ENCODE measurements at regions of chr2 and their contacts with region 1.

Region 1: DNA sequence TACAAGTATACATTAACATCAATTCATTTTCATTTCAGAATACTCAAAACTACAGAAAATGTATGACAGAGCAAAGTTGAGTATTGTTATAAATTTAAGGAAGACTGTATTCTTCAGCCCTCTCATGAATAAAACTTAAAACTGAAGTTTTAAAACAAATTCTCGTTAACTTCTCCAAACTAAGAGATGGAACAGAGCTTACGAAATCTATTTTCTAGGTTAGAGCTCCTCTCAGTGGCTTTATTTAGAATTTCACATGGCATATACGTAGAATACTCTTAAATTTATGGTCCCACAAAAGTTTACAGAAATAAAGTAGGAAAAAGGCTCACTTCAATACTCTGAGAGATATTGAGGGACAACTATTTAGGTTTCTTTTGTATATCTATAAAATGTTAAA is 612.1 kb downstream of the KCNJ3 start:
- DNase-seq: no peak
- H3K4me3 ChIP-seq: no peak overlapping the region
- H3K27ac ChIP-seq: no peak overlapping the region
- H3K4me1 ChIP-seq: no peaks in the 10 kb centered on the region
- H3K27me3 ChIP-seq: no peaks in the 10 kb centered on the region
- CTCF ChIP-seq: peak in 2 of 3 experiments; percentile 19 to 41

Region 2: GRCh38 chr2:154439156-154439555 is 871.4 kb before region 1 on chr2:
- intact Hi-C with region 1: loop called (anchors 10 kb)
- DNase-seq: no peak
- H3K4me3 ChIP-seq: no peak overlapping the region
- H3K27ac ChIP-seq: no peak overlapping the region
- H3K4me1 ChIP-seq: no peaks in the 10 kb centered on the region
- H3K27me3 ChIP-seq: no peaks in the 10 kb centered on the region
- CTCF ChIP-seq: peak in 1 of 3 experiments; percentile 28

Region 3: GRCh38 chr2:154924531-154924930 is 386.1 kb before region 1 on chr2:
- intact Hi-C with region 1: no loop called
- DNase-seq: no peak
- H3K4me3 ChIP-seq: no peak overlapping the region
- H3K27ac ChIP-seq: no peak overlapping the region
- H3K4me1 ChIP-seq: no peaks in the 10 kb centered on the region
- H3K27me3 ChIP-seq: no peaks in the 10 kb centered on the region
- CTCF ChIP-seq: no peak

Measured in ascending aorta (tissue), 2 donors.